PC-9 (cell line): ENCODE measurements at regions of chr5 and their contacts with region 1.

Region 1: GRCh38 chr5:28374492-28374934 is 1336.1 kb upstream of the CDH9 start:
- DNase-seq: peak; percentile 40 to 85
- H3K4me3 ChIP-seq: no peak overlapping the region
- H3K27ac ChIP-seq: no peak overlapping the region
- H3K4me1 ChIP-seq: no peaks in the 10 kb centered on the region
- H3K27me3 ChIP-seq: no peaks in the 10 kb centered on the region
- CTCF ChIP-seq: no peak

Region 2: GRCh38 chr5:27592231-27592630 is 782.3 kb before region 1 on chr5:
- CTCF ChIA-PET with region 1: no interaction called
- POLR2A ChIA-PET with region 1: no interaction called
- intact Hi-C with region 1: no loop called
- DNase-seq: peak in 1 of 2 experiments; percentile 18
- H3K4me3 ChIP-seq: no peak overlapping the region
- H3K27ac ChIP-seq: no peak overlapping the region
- H3K4me1 ChIP-seq: no peaks in the 10 kb centered on the region
- H3K27me3 ChIP-seq: no peaks in the 10 kb centered on the region
- CTCF ChIP-seq: no peak

Region 3: GRCh38 chr5:28408186-28408585 is 33.7 kb after region 1 on chr5:
- CTCF ChIA-PET with region 1: no interaction called
- POLR2A ChIA-PET with region 1: no interaction called
- intact Hi-C with region 1: loop called (anchors 2 kb)
- DNase-seq: peak; percentile 55 to 59
- H3K4me3 ChIP-seq: no peak overlapping the region
- H3K27ac ChIP-seq: no peak overlapping the region
- H3K4me1 ChIP-seq: peaks cover 6% of the 10 kb centered on the region; the same call in 1 of the 2 replicates
- H3K27me3 ChIP-seq: no peaks in the 10 kb centered on the region
- CTCF ChIP-seq: no peak